T-cell (primary cell): ENCODE measurements at regions of chr13 and their contacts with region 1.

Region 1: DNA sequence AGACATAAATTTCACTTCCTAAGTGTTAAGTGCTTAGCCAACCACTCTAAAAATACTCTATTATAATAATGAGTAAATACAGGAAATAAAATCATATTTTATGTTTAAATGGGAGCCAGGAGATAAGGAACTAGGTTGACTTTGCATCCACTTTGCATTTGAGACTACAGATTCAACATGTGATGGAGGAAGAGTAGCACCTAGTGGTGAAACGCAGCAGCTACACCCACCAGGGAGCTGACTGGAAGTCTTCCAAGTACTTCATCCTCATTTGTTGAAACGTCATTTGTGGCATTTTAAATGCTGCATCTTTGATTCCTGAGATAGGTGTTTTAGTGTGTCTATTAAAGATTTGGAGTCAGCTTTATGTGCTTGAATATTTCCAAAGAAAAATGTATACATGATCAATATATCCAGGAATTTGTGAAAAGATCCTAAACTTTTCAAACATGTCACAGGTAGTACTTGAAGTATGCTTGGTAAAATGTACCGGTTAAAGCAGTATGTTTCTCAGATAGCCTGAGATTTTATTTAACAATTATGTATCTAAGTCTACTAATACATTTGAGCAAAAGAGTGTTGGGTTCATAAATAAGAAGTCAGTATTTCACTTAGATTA is 17.4 kb upstream of the KCTD12 start:
- DNase-seq: peak; percentile 21 to 81 (median 53)
- ATAC-seq: peak; percentile 65 to 89 (median 87)
- H3K4me3 ChIP-seq: no peak overlapping the region
- H3K4me3 Mint-ChIP-seq: no peak overlapping the region
- H3K27ac ChIP-seq: no peak overlapping the region
- H3K27ac Mint-ChIP-seq: no peak overlapping the region
- H3K4me1 ChIP-seq: no peaks in the 10 kb centered on the region
- H3K4me1 Mint-ChIP-seq: no peaks in the 10 kb centered on the region
- H3K27me3 ChIP-seq: peaks cover 0 to 6% of the 10 kb centered on the region in 2 experiments
- H3K27me3 Mint-ChIP-seq: peaks cover 4 to 8% of the 10 kb centered on the region in 2 donors

Region 2: DNA sequence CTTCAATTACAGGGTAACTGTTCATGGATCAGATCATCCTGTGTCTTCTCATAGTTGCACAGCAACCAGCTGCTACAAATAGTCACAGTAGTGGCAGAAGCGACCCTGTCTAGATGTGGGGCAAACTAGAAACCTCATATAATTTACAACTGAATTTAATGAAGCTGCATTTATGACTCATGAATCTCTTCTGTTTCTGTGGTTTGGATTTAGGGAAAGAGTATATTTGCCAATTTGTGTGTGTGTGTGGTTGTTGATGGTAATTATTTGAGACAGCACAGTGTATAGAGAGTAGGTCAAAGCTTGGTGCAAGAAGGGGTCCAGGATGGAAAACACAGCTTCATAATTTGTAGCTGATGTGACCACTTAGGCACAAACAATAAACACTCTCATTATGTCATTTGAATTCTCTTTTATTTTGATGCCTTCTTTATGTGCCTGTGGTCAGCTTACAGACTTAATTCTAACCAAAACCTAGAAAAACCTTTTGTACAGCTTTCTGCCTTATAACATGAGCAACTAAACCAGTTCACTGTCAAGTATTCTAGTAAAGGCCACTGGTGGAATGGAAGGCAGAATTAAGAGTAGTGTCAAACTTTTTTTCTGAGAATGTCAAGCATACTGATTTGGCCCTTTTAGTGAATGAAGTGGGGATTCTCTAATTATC is 1639.8 kb before region 1 on chr13:
- CTCF ChIA-PET with region 1: no interaction called
- POLR2A ChIA-PET with region 1: no interaction called
- DNase-seq: no peak
- ATAC-seq: no peak
- H3K4me3 ChIP-seq: no peak overlapping the region
- H3K4me3 Mint-ChIP-seq: no peak overlapping the region
- H3K27ac ChIP-seq: no peak overlapping the region
- H3K27ac Mint-ChIP-seq: no peak overlapping the region
- H3K4me1 ChIP-seq: no peaks in the 10 kb centered on the region
- H3K4me1 Mint-ChIP-seq: no peaks in the 10 kb centered on the region
- H3K27me3 ChIP-seq: no peaks in the 10 kb centered on the region
- H3K27me3 Mint-ChIP-seq: peaks cover 0 to 3% of the 10 kb centered on the region in 2 donors

Region 3: GRCh38 chr13:75691183-75691582 is 1212.5 kb before region 1 on chr13:
- CTCF ChIA-PET with region 1: interaction called, 3 to 42 read pairs
- POLR2A ChIA-PET with region 1: no interaction called
- DNase-seq: no peak
- ATAC-seq: no peak
- H3K4me3 ChIP-seq: no peak overlapping the region
- H3K4me3 Mint-ChIP-seq: no peak overlapping the region
- H3K27ac ChIP-seq: no peak overlapping the region
- H3K27ac Mint-ChIP-seq: no peak overlapping the region
- H3K4me1 ChIP-seq: peaks cover 0 to 3% of the 10 kb centered on the region in 2 experiments
- H3K4me1 Mint-ChIP-seq: no peaks in the 10 kb centered on the region
- H3K27me3 ChIP-seq: no peaks in the 10 kb centered on the region
- H3K27me3 Mint-ChIP-seq: no peaks in the 10 kb centered on the region

Region 4: DNA sequence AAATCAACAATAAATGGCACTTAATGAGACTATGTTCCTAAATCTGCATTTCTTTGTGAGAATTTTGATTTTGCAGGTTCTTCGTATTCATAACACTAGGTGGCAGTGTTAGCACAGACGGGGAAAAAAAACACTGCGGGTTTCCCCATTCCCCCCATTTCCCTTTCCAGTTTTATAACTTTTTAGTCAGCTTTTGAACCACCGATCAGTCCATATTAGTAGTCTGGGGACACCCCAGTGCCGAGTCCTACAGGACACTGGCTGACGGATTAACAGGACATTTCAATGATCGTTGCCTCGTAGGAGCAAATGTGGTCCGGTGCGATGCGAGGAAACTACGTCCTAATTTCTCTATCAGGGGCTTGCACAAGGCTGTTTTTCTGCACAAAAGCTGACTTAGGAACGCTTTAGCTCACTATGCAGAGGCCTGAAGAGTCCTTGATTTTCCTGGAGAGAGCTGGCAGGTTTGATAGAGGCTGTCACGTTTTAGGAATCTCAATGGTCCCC is 1033.2 kb before region 1 on chr13:
- CTCF ChIA-PET with region 1: interaction called, 7 to 33 read pairs
- POLR2A ChIA-PET with region 1: no interaction called
- DNase-seq: peak in 11 of 35 experiments; percentile 1 to 56 (median 4)
- ATAC-seq: peak; percentile 33 to 65 (median 54)
- H3K4me3 ChIP-seq: peak overlapping the region in 1 of 2 donors; percentile 29
- H3K4me3 Mint-ChIP-seq: peak overlapping the region; percentile 63 to 74 (median 70)
- H3K27ac ChIP-seq: peak overlapping the region; percentile 48
- H3K27ac Mint-ChIP-seq: peak overlapping the region; percentile 81 to 85
- H3K4me1 ChIP-seq: peaks cover 5 to 12% of the 10 kb centered on the region in 2 experiments
- H3K4me1 Mint-ChIP-seq: peaks cover 18 to 20% (median 19%) of the 10 kb centered on the region in 3 donors
- H3K27me3 ChIP-seq: peaks cover 0 to 3% of the 10 kb centered on the region in 2 experiments
- H3K27me3 Mint-ChIP-seq: peaks cover 0 to 7% of the 10 kb centered on the region in 2 donors

Region 5: DNA sequence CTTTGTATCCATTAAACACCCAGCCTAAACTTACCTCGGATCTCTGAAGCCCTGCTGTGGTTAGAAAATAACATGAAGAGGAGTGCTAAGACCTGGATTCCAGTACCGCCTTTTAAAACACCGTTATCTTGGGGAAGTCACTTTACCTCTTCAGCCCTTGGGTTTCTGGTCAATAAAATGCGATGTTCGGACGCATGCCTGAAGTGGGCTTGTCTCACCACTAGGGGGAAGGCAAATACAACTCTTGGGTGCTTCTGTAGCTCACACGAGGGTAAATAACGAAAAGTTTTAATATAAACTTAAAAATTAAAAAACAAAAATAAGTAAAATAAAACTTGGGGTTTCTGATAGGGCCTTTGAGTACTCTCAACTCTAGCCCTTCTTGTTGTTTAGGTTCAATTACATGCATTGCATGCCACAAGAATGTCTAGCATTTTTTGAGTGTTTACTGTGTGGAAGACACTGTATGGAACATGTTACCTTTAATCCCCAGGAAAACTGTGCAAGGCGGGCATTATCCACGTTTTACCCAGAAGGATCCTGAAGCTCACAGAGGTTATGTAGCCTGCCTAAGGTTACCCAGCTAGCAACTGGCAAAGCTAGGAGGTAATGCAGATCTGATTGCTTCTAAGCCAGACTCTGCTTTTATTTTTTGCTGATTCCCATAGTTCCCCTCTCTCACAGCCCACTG is 1027.1 kb before region 1 on chr13:
- CTCF ChIA-PET with region 1: interaction called, 7 to 33 read pairs
- POLR2A ChIA-PET with region 1: interaction called in 1 of 2 experiments, 3 read pairs
- DNase-seq: peak in 31 of 35 experiments; percentile 3 to 72 (median 30)
- ATAC-seq: peak; percentile 83 to 92 (median 90)
- H3K4me3 ChIP-seq: no peak overlapping the region
- H3K4me3 Mint-ChIP-seq: peak overlapping the region in 1 of 3 donors; percentile 26
- H3K27ac ChIP-seq: no peak overlapping the region
- H3K27ac Mint-ChIP-seq: peak overlapping the region in 1 of 2 donors; percentile 20
- H3K4me1 ChIP-seq: peaks cover 4 to 5% of the 10 kb centered on the region in 2 experiments
- H3K4me1 Mint-ChIP-seq: peaks cover 12 to 18% (median 14%) of the 10 kb centered on the region in 3 donors
- H3K27me3 ChIP-seq: peaks cover 0 to 3% of the 10 kb centered on the region in 2 experiments
- H3K27me3 Mint-ChIP-seq: peaks cover 0 to 10% of the 10 kb centered on the region in 2 donors

Region 6: DNA sequence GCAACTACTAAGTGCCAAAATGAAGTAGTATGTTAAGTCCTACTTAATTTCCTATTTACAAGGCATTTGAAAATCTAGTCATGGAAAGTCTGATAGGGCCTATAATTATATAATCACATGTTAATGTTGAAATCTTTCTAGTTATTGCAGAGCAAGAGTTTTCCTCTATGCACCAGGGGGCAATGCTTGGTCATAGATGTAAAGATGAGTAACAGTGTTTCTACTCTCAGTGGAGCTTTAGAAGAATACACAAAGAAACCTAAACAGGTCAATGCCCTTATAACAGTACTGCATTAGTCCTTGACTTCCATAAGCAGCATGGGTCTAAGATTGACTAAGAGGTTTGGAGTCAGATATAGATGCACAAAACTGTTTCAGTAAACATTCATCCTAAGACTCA is 236.1 kb before region 1 on chr13:
- CTCF ChIA-PET with region 1: interaction called, 7 to 17 read pairs
- POLR2A ChIA-PET with region 1: no interaction called
- DNase-seq: peak in 8 of 35 experiments; percentile 0 to 47 (median 7)
- ATAC-seq: peak in 3 of 4 experiments; percentile 48 to 51 (median 49)
- H3K4me3 ChIP-seq: no peak overlapping the region
- H3K4me3 Mint-ChIP-seq: no peak overlapping the region
- H3K27ac ChIP-seq: no peak overlapping the region
- H3K27ac Mint-ChIP-seq: no peak overlapping the region
- H3K4me1 ChIP-seq: no peaks in the 10 kb centered on the region
- H3K4me1 Mint-ChIP-seq: no peaks in the 10 kb centered on the region
- H3K27me3 ChIP-seq: no peaks in the 10 kb centered on the region
- H3K27me3 Mint-ChIP-seq: no peaks in the 10 kb centered on the region

Region 7: GRCh38 chr13:76886292-76887075 is 17.2 kb before region 1 on chr13 and contains the start of gene KCTD12:
- CTCF ChIA-PET with region 1: interaction called in 1 of 2 experiments, 10 read pairs
- POLR2A ChIA-PET with region 1: no interaction called
- DNase-seq: peak; percentile 36 to 86 (median 65)
- ATAC-seq: peak; percentile 76 to 83 (median 81)
- H3K4me3 ChIP-seq: peak within 1 kb of the TSS; percentile 56 to 88
- H3K4me3 Mint-ChIP-seq: peak within 1 kb of the TSS; percentile 78 to 84 (median 81)
- H3K27ac ChIP-seq: no peak within 1 kb of the TSS
- H3K27ac Mint-ChIP-seq: peak within 1 kb of the TSS; percentile 49 to 58
- H3K4me1 ChIP-seq: peaks cover 11 to 25% of the 10 kb centered on the region in 2 experiments
- H3K4me1 Mint-ChIP-seq: peaks cover 29 to 34% (median 33%) of the 10 kb centered on the region in 3 donors
- H3K27me3 ChIP-seq: peaks cover 0 to 25% of the 10 kb centered on the region in 2 experiments
- H3K27me3 Mint-ChIP-seq: peaks cover 5 to 19% of the 10 kb centered on the region in 2 donors
- total RNA-seq, gene KCTD12: 3.8 to 8.7 (median 6.2) TPM